T-cell (primary cell): ENCODE measurements at regions of chr3 and their contacts with region 1.

Region 1: GRCh38 chr3:69236812-69237707 is 114.7 kb upstream of the LMOD3 start:
- DNase-seq: peak in 1 of 35 experiments; percentile 22
- ATAC-seq: peak; percentile 54 to 70 (median 62)
- H3K4me3 ChIP-seq: peak overlapping the region in 1 of 2 donors; percentile 10
- H3K4me3 Mint-ChIP-seq: peak overlapping the region; percentile 41 to 74 (median 58)
- H3K27ac ChIP-seq: peak overlapping the region; percentile 14
- H3K27ac Mint-ChIP-seq: peak overlapping the region; percentile 77 to 89
- H3K4me1 ChIP-seq: peaks cover 6 to 20% of the 10 kb centered on the region in 2 experiments
- H3K4me1 Mint-ChIP-seq: peaks cover 21 to 30% (median 26%) of the 10 kb centered on the region in 3 donors
- H3K27me3 ChIP-seq: no peaks in the 10 kb centered on the region
- H3K27me3 Mint-ChIP-seq: no peaks in the 10 kb centered on the region

Region 2: GRCh38 chr3:69186575-69187093 is 50.4 kb before region 1 on chr3:
- CTCF ChIA-PET with region 1: no interaction called
- POLR2A ChIA-PET with region 1: no interaction called
- DNase-seq: no peak
- ATAC-seq: no peak
- H3K4me3 ChIP-seq: no peak overlapping the region
- H3K4me3 Mint-ChIP-seq: no peak overlapping the region
- H3K27ac ChIP-seq: no peak overlapping the region
- H3K27ac Mint-ChIP-seq: no peak overlapping the region
- H3K4me1 ChIP-seq: no peaks in the 10 kb centered on the region
- H3K4me1 Mint-ChIP-seq: no peaks in the 10 kb centered on the region
- H3K27me3 ChIP-seq: no peaks in the 10 kb centered on the region
- H3K27me3 Mint-ChIP-seq: no peaks in the 10 kb centered on the region

Region 3: GRCh38 chr3:69306239-69307185 is 69.5 kb after region 1 on chr3:
- CTCF ChIA-PET with region 1: interaction called, 10 to 13 read pairs
- POLR2A ChIA-PET with region 1: no interaction called
- DNase-seq: peak; percentile 23 to 87 (median 54)
- ATAC-seq: peak; percentile 96 to 98 (median 98)
- H3K4me3 ChIP-seq: no peak overlapping the region
- H3K4me3 Mint-ChIP-seq: no peak overlapping the region
- H3K27ac ChIP-seq: no peak overlapping the region
- H3K27ac Mint-ChIP-seq: no peak overlapping the region
- H3K4me1 ChIP-seq: no peaks in the 10 kb centered on the region
- H3K4me1 Mint-ChIP-seq: peaks cover 6 to 8% (median 7%) of the 10 kb centered on the region in 3 donors
- H3K27me3 ChIP-seq: no peaks in the 10 kb centered on the region
- H3K27me3 Mint-ChIP-seq: no peaks in the 10 kb centered on the region